CD4-positive, alpha-beta memory T cell (primary cell): ENCODE measurements at regions of chr4 and their contacts with region 1.

Region 1: GRCh38 chr4:88366460-88366859 is 12.2 kb upstream of the HERC6 start:
- DNase-seq: no peak
- H3K4me3 ChIP-seq: no peak overlapping the region
- H3K4me3 Mint-ChIP-seq: no peak overlapping the region
- H3K27ac ChIP-seq: no peak overlapping the region
- H3K27ac Mint-ChIP-seq: no peak overlapping the region
- H3K4me1 ChIP-seq: no peaks in the 10 kb centered on the region
- H3K4me1 Mint-ChIP-seq: peaks cover 0 to 3% (median 0%) of the 10 kb centered on the region in 4 donors
- H3K27me3 ChIP-seq: no peaks in the 10 kb centered on the region
- H3K27me3 Mint-ChIP-seq: peaks cover 0 to 10% of the 10 kb centered on the region in 2 donors

Region 2: GRCh38 chr4:88378691-88379559 is 12.5 kb after region 1 on chr4 and contains the start of gene HERC6:
- CTCF ChIA-PET with region 1: interaction called, 12 read pairs
- POLR2A ChIA-PET with region 1: interaction called, 4 read pairs
- intact Hi-C with region 1: no loop called
- DNase-seq: peak; percentile 74 to 89 (median 80)
- H3K4me3 ChIP-seq: peak within 1 kb of the TSS; percentile 82 to 96
- H3K4me3 Mint-ChIP-seq: peak within 1 kb of the TSS; percentile 95 to 99 (median 97)
- H3K27ac ChIP-seq: peak within 1 kb of the TSS; percentile 86
- H3K27ac Mint-ChIP-seq: peak within 1 kb of the TSS; percentile 94 to 98 (median 97)
- H3K4me1 ChIP-seq: peaks cover 37% of the 10 kb centered on the region
- H3K4me1 Mint-ChIP-seq: peaks cover 37 to 54% (median 43%) of the 10 kb centered on the region in 4 donors
- H3K27me3 ChIP-seq: no peaks in the 10 kb centered on the region
- H3K27me3 Mint-ChIP-seq: no peaks in the 10 kb centered on the region
- total RNA-seq, gene HERC6: 26.8 to 29.5 TPM